CD8-positive, alpha-beta T cell (primary cell): ENCODE measurements at regions of chr1 and their contacts with region 1.

Region 1: GRCh38 chr1:198556971-198557370 is 16.5 kb upstream of the ATP6V1G3 start:
- DNase-seq: peak; percentile 37 to 94 (median 63)
- ATAC-seq: peak; percentile 87
- H3K4me3 ChIP-seq: peak overlapping the region; percentile 3 to 33
- H3K4me3 Mint-ChIP-seq: peak overlapping the region; percentile 65
- H3K27ac ChIP-seq: peak overlapping the region; percentile 8 to 68
- H3K27ac Mint-ChIP-seq: peak overlapping the region; percentile 64
- H3K4me1 ChIP-seq: peaks cover 88% of the 10 kb centered on the region
- H3K4me1 Mint-ChIP-seq: peaks cover 87% of the 10 kb centered on the region
- H3K27me3 ChIP-seq: no peaks in the 10 kb centered on the region
- H3K27me3 Mint-ChIP-seq: no peaks in the 10 kb centered on the region
- CTCF ChIP-seq: no peak

Region 2: GRCh38 chr1:198529414-198529813 is 27.6 kb before region 1 on chr1:
- CTCF ChIA-PET with region 1: no interaction called
- POLR2A ChIA-PET with region 1: interaction called, 3 read pairs
- intact Hi-C with region 1: loop called (anchors 2 to 5 kb)
- DNase-seq: no peak
- ATAC-seq: no peak
- H3K4me3 ChIP-seq: no peak overlapping the region
- H3K4me3 Mint-ChIP-seq: no peak overlapping the region
- H3K27ac ChIP-seq: no peak overlapping the region
- H3K27ac Mint-ChIP-seq: no peak overlapping the region
- H3K4me1 ChIP-seq: peaks cover 59% of the 10 kb centered on the region
- H3K4me1 Mint-ChIP-seq: peaks cover 70% of the 10 kb centered on the region
- H3K27me3 ChIP-seq: no peaks in the 10 kb centered on the region
- H3K27me3 Mint-ChIP-seq: no peaks in the 10 kb centered on the region
- CTCF ChIP-seq: no peak

Region 3: DNA sequence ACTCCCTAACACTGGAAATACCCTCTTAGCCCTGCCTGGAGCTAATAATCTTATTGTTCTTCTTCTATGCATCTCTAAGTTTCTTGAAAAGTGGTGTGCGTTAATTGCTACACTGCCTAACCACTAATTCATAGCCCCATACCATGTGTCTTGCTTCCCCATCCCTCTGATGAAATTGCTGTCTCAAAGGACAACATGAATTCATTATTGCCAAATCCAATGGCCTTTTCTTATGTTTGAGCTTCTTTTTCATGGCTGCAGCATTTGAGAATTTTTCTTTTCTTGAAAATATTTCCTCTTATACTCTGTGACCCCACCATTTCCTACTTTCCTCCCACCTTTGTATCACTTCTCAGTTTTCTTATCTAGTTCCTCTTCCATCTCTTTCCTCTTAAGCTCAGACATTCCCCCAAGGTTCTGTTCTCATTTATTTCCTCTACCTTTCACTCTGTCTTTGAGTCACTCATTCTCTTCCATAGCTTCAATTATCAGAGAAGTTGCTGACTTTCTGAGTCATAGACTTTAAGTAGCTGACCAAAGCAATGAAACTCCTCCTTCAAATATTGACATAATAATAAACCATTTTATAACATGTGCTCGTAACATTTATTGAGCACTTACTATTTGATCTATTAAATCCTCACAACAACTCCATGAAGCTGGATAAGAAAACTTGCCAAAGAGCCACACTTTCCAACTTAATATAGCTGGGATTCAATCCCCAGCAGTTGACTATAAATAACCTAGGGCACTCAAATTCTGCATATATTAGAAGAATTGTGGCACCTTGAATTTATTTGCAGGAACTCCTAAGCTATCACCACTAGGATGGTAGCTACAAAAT is 19.0 kb after region 1 on chr1:
- CTCF ChIA-PET with region 1: interaction called, 4 read pairs
- POLR2A ChIA-PET with region 1: no interaction called
- intact Hi-C with region 1: loop called in 1 of 2 experiments (anchors 2 kb)
- DNase-seq: no peak
- ATAC-seq: no peak
- H3K4me3 ChIP-seq: no peak overlapping the region
- H3K4me3 Mint-ChIP-seq: no peak overlapping the region
- H3K27ac ChIP-seq: no peak overlapping the region
- H3K27ac Mint-ChIP-seq: no peak overlapping the region
- H3K4me1 ChIP-seq: no peaks in the 10 kb centered on the region
- H3K4me1 Mint-ChIP-seq: peaks cover 25% of the 10 kb centered on the region
- H3K27me3 ChIP-seq: no peaks in the 10 kb centered on the region
- H3K27me3 Mint-ChIP-seq: no peaks in the 10 kb centered on the region
- CTCF ChIP-seq: no peak

Region 4: DNA sequence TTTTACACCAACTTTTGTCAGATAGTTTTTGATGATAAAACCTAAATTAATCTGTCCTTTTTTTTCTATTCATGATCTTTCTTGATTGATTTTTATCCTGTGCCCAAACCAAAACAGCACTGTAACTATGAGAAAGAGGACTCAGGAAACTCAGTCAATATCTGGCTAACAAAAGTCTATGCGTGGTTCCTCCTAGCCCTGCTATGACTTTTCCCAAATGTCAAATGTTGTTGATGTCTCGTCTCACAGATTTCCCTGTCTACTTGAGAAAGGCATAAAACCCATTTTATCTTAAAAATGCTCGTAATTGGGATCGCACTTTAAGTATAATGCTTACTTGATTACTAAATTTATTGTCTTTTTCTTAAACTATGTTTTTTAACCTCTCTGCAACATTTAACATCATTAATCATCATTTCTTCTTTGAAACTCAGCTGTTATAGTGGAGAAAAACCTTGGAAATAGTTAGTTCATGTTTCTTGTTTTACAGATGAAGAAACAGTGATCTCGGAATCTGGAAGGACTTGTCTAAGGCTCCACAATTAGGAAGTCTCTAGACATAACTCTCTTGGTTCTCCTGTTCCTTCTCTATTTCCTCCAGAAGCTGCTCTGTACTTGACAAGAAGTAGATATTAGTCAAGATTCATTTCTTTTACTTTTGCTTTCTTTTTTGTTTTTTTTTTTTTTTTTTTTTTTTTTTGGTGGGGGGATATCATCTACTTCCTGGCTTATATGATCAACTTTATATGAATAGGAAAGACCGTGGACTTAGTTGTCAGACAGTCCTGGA is 55.7 kb after region 1 on chr1:
- CTCF ChIA-PET with region 1: interaction called, 3 read pairs
- POLR2A ChIA-PET with region 1: interaction called, 4 read pairs
- intact Hi-C with region 1: loop called in 1 of 2 experiments (anchors 1 kb)
- DNase-seq: peak in 2 of 9 experiments; percentile 44 to 67
- ATAC-seq: peak; percentile 50
- H3K4me3 ChIP-seq: peak overlapping the region; percentile 13 to 42
- H3K4me3 Mint-ChIP-seq: peak overlapping the region; percentile 83
- H3K27ac ChIP-seq: peak overlapping the region; percentile 54 to 85
- H3K27ac Mint-ChIP-seq: peak overlapping the region; percentile 98
- H3K4me1 ChIP-seq: peaks cover 65% of the 10 kb centered on the region
- H3K4me1 Mint-ChIP-seq: peaks cover 76% of the 10 kb centered on the region
- H3K27me3 ChIP-seq: no peaks in the 10 kb centered on the region
- H3K27me3 Mint-ChIP-seq: no peaks in the 10 kb centered on the region
- CTCF ChIP-seq: no peak